GM12878 (cell line): ENCODE measurements at regions of chr12 and their contacts with region 1.

Region 1: GRCh38 chr12:12505544-12506495 is 56.8 kb downstream of the DUSP16 start:
- DNase-seq: peak; percentile 94
- ATAC-seq: peak; percentile 87
- H3K4me3 ChIP-seq: peak overlapping the region; percentile 30
- H3K27ac ChIP-seq: peak overlapping the region; percentile 80
- H3K4me1 ChIP-seq: peaks cover 36% of the 10 kb centered on the region
- H3K27me3 ChIP-seq: no peaks in the 10 kb centered on the region
- CTCF ChIP-seq: no peak
- EP300 ChIP-seq: peak; percentile 92
- POLR2A ChIP-seq: no peak
- RAD21 ChIP-seq: peak; percentile 19; the same call in 1 of the 2 replicates

Region 2: GRCh38 chr12:12376646-12377448 is 129.0 kb before region 1 on chr12:
- CTCF ChIA-PET with region 1: interaction called, 35 read pairs
- POLR2A ChIA-PET with region 1: interaction called, 6 read pairs
- RAD21 ChIA-PET with region 1: interaction called, 23 read pairs
- SMC1A ChIA-PET with region 1: interaction called, 33 read pairs
- in situ Hi-C with region 1: no loop called
- intact Hi-C with region 1: loop called (anchors 5 kb)
- DNase-seq: peak; percentile 55
- ATAC-seq: peak; percentile 76
- H3K4me3 ChIP-seq: no peak overlapping the region
- H3K27ac ChIP-seq: no peak overlapping the region; the same call in 1 of the 2 replicates
- H3K4me1 ChIP-seq: peaks cover 6% of the 10 kb centered on the region
- H3K27me3 ChIP-seq: no peaks in the 10 kb centered on the region
- CTCF ChIP-seq: peak; percentile 41 to 81 (median 58); a peak in 5 of 6 replicates
- EP300 ChIP-seq: no peak
- POLR2A ChIP-seq: no peak
- RAD21 ChIP-seq: peak; percentile 98

Region 3: DNA sequence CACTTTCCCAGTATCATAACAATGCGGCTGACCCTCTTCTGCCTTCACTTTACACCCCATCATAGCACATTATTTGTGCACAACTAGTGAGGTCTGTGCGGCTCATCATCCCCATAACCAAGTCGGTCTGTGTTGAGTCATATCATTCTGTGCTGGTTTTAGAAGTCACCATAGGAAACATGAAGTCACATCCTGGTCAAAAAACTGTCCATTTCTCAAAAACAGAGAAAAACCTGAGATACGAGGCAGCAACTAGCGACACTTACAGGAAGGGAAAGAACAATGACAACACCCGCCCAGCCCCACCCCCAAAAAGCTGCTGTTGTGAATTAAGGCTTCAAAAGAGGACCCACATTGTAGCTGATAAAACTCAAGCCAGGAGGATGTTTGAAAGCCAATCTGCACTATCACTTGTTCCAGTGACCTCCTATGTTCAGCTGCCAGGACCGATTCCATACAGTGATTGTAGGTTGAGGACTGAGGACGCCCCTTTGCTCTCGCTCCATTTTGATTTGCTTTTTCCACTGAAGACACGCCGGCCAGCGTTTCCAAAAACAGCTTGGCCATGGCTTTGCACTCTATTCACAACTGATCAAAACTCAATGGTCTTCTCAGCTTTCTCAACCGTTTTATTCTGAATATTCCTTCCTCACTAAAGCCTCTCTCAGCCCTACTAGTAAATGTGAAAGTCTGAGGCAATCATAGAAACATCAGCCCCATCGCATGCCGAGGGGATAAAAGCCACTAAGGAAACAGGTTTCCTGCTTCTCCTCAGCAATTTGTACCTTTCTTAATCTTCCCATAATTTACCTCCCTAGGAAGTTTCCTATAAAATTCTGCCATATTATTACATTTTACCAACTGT is 30.7 kb before region 1 on chr12:
- CTCF ChIA-PET with region 1: interaction called, 37 read pairs
- POLR2A ChIA-PET with region 1: interaction called, 16 read pairs
- RAD21 ChIA-PET with region 1: interaction called, 42 read pairs
- SMC1A ChIA-PET with region 1: interaction called, 49 read pairs
- in situ Hi-C with region 1: no loop called
- intact Hi-C with region 1: no loop called
- DNase-seq: peak; percentile 87
- ATAC-seq: peak; percentile 98
- H3K4me3 ChIP-seq: 0 out of 2 replicates have a peak overlapping the region, but pooled peaks have one; percentile 30
- H3K27ac ChIP-seq: peak overlapping the region; percentile 94
- H3K4me1 ChIP-seq: peaks cover 24% of the 10 kb centered on the region
- H3K27me3 ChIP-seq: no peaks in the 10 kb centered on the region
- CTCF ChIP-seq: peak in 1 of 3 experiments; percentile 19; a peak in 1 of 6 replicates
- EP300 ChIP-seq: peak; percentile 82 to 88; a peak in 3 of 4 replicates
- POLR2A ChIP-seq: no peak
- RAD21 ChIP-seq: peak; percentile 61

Region 4: GRCh38 chr12:12521044-12521485 is 15.2 kb after region 1 on chr12:
- CTCF ChIA-PET with region 1: interaction called, 11 read pairs
- POLR2A ChIA-PET with region 1: interaction called, 19 read pairs
- RAD21 ChIA-PET with region 1: interaction called, 8 read pairs
- SMC1A ChIA-PET with region 1: interaction called, 34 read pairs
- in situ Hi-C with region 1: no loop called
- intact Hi-C with region 1: no loop called
- DNase-seq: no peak
- ATAC-seq: no peak
- H3K4me3 ChIP-seq: no peak overlapping the region
- H3K27ac ChIP-seq: no peak overlapping the region
- H3K4me1 ChIP-seq: no peaks in the 10 kb centered on the region
- H3K27me3 ChIP-seq: no peaks in the 10 kb centered on the region
- CTCF ChIP-seq: no peak
- EP300 ChIP-seq: no peak
- POLR2A ChIP-seq: no peak
- RAD21 ChIP-seq: no peak

Region 5: DNA sequence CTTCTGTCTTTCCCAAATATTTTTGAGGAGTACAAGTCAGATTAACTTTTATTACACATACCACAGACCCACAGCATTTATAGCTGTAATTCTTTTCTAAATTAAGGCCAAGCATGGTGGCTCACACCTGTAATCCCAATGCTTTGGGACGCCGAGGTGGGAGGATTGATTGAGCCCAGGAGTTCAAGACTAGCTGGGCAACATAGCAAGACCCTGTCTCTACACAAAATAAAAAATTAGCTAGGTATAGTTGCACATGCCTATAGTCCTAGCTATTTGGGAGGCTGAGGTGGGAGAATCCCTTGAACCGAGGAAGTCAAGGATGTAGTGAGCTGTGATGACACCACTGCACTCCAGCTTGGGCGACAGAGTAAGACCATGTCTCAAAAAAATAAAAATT is 49.8 kb after region 1 on chr12:
- CTCF ChIA-PET with region 1: interaction called, 6 read pairs
- POLR2A ChIA-PET with region 1: interaction called, 17 read pairs
- RAD21 ChIA-PET with region 1: interaction called, 24 read pairs
- SMC1A ChIA-PET with region 1: interaction called, 34 read pairs
- in situ Hi-C with region 1: no loop called
- intact Hi-C with region 1: loop called (anchors 5 kb)
- DNase-seq: no peak
- ATAC-seq: no peak
- H3K4me3 ChIP-seq: no peak overlapping the region
- H3K27ac ChIP-seq: no peak overlapping the region
- H3K4me1 ChIP-seq: peaks cover 16% of the 10 kb centered on the region
- H3K27me3 ChIP-seq: no peaks in the 10 kb centered on the region
- CTCF ChIP-seq: no peak
- EP300 ChIP-seq: no peak
- POLR2A ChIP-seq: no peak
- RAD21 ChIP-seq: no peak

Region 6: GRCh38 chr12:12704593-12705230 is 198.9 kb after region 1 on chr12:
- CTCF ChIA-PET with region 1: no interaction called
- POLR2A ChIA-PET with region 1: interaction called, 5 read pairs
- RAD21 ChIA-PET with region 1: interaction called, 6 read pairs
- SMC1A ChIA-PET with region 1: interaction called, 5 read pairs
- in situ Hi-C with region 1: no loop called
- intact Hi-C with region 1: loop called (anchors 5 kb)
- DNase-seq: no peak
- ATAC-seq: peak; percentile 89
- H3K4me3 ChIP-seq: no peak overlapping the region
- H3K27ac ChIP-seq: no peak overlapping the region
- H3K4me1 ChIP-seq: peaks cover 18% of the 10 kb centered on the region
- H3K27me3 ChIP-seq: no peaks in the 10 kb centered on the region
- CTCF ChIP-seq: peak; percentile 69 to 97 (median 93); a peak in 5 of 6 replicates
- EP300 ChIP-seq: no peak
- POLR2A ChIP-seq: no peak
- RAD21 ChIP-seq: peak; percentile 99